GM12878 (cell line): ENCODE measurements at regions of chr12 and their contacts with region 1.

Region 1: GRCh38 chr12:123633379-123634141 is at the starts of genes EIF2B1 and GTF2H3:
- DNase-seq: peak; percentile 92
- ATAC-seq: peak; percentile 98
- H3K4me3 ChIP-seq: peak within 1 kb of the TSS; percentile 97
- H3K27ac ChIP-seq: peak within 1 kb of the TSS; percentile 87
- H3K4me1 ChIP-seq: no peaks in the 10 kb centered on the region
- H3K27me3 ChIP-seq: no peaks in the 10 kb centered on the region
- CTCF ChIP-seq: no peak
- EP300 ChIP-seq: peak in 1 of 2 experiments; percentile 61; a peak in 1 of 4 replicates
- POLR2A ChIP-seq: peak; percentile 98
- RAD21 ChIP-seq: no peak; the same call in 1 of the 2 replicates
- polyA plus RNA-seq, gene EIF2B1: 17.6 to 25.9 TPM
- polyA plus RNA-seq, gene GTF2H3: 20.6 to 31.1 TPM

Region 2: GRCh38 chr12:123761841-123762714 is 128.5 kb after region 1 on chr12 and contains the start of gene DNAH10:
- CTCF ChIA-PET with region 1: no interaction called
- POLR2A ChIA-PET with region 1: no interaction called
- RAD21 ChIA-PET with region 1: no interaction called
- SMC1A ChIA-PET with region 1: no interaction called
- in situ Hi-C with region 1: no loop called
- intact Hi-C with region 1: loop called (anchors 5 kb)
- DNase-seq: peak; percentile 4
- ATAC-seq: peak; percentile 91
- H3K4me3 ChIP-seq: peak within 1 kb of the TSS; percentile 61
- H3K27ac ChIP-seq: no peak within 1 kb of the TSS
- H3K4me1 ChIP-seq: peaks cover 6% of the 10 kb centered on the region
- H3K27me3 ChIP-seq: no peaks in the 10 kb centered on the region
- CTCF ChIP-seq: peak; percentile 51 to 65 (median 56); a peak in 5 of 6 replicates
- EP300 ChIP-seq: no peak
- POLR2A ChIP-seq: peak; percentile 45; the same call in 1 of the 2 replicates
- RAD21 ChIP-seq: peak; percentile 75
- polyA plus RNA-seq, gene DNAH10: 0.04 to 0.05 TPM

Region 3: GRCh38 chr12:123843912-123844748 is 210.6 kb after region 1 on chr12:
- CTCF ChIA-PET with region 1: no interaction called
- POLR2A ChIA-PET with region 1: no interaction called
- RAD21 ChIA-PET with region 1: no interaction called
- SMC1A ChIA-PET with region 1: interaction called, 3 read pairs
- in situ Hi-C with region 1: no loop called
- intact Hi-C with region 1: loop called (anchors 10 kb)
- DNase-seq: no peak
- ATAC-seq: no peak
- H3K4me3 ChIP-seq: no peak overlapping the region
- H3K27ac ChIP-seq: no peak overlapping the region
- H3K4me1 ChIP-seq: peaks cover 7% of the 10 kb centered on the region; the same call in 1 of the 2 replicates
- H3K27me3 ChIP-seq: no peaks in the 10 kb centered on the region
- CTCF ChIP-seq: no peak
- EP300 ChIP-seq: no peak
- POLR2A ChIP-seq: no peak
- RAD21 ChIP-seq: no peak